Left cardiac atrium (tissue), 4 donors: ENCODE measurements at regions of chr13 and their contacts with region 1.

Region 1: GRCh38 chr13:29849731-29850223 is 640 bp downstream of the UBL3 start:
- DNase-seq: peak; percentile 65
- ATAC-seq: peak; percentile 50 to 59

Region 2: DNA sequence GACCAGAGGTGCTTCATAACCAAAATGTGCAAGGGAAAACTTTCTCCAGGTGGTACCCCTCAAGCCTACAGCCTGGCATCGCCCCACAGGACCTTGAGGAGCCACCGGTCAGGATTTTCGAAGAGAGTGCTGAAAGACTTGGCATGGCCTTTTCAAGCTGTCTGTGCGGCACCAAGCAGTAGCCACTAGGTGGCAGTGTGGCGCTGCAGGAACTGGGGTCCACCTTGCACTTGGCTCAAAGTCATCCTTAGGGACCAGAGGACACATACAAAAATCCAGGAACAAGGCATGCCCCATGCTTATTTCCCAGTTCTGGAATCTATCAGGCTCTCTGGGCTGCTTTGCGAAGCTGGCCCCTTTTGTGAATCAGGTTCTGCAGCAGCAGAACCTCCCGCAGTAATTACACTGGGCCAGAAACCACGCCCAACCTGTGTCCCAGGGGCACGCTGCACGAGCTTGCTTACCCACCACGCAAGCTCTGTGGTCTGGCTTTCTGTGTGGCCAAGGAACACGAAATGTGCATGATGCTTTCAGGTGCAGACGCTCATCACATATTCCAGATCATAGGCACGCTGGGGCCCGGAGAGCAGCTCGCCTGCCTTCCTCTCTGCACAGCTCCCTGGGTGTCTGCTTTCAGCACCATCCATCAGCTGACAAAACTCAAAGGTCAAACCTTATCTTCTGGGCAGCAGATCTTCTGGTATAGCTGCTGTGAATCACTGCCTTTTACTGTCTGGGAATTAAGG is 341.5 kb before region 1 on chr13:
- intact Hi-C with region 1: loop called in 1 of 2 experiments (anchors 10 kb)
- DNase-seq: peak; percentile 87
- ATAC-seq: peak; percentile 84 to 89

Region 3: DNA sequence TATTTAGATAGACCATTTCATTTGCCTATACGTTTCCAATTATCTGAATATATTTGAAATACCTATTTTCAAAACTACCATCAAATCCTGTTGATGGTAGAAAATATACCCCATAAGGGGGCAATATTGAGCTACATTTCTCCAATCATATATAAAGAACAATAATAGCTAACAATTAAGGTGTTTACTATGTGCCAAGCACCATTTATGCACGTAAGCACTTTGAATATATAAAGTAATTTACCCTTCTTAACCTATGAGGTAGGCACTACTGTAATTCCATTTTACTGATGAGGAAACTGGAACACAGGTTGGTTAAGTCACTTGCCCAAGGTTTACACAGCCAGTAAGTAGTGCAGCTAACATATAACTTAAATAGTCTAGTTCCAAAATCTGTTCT is 78.5 kb before region 1 on chr13:
- intact Hi-C with region 1: loop called in 1 of 2 experiments (anchors 10 kb)
- DNase-seq: no peak
- ATAC-seq: no peak